B cell (primary cell): ENCODE measurements at regions of chr14 and their contacts with region 1.

Region 1: GRCh38 chr14:52391881-52392615 is 77.9 kb downstream of the PTGER2 start:
- DNase-seq: no peak
- ATAC-seq: no peak
- H3K4me3 ChIP-seq: no peak overlapping the region
- H3K4me3 Mint-ChIP-seq: no peak overlapping the region
- H3K27ac ChIP-seq: no peak overlapping the region
- H3K27ac Mint-ChIP-seq: no peak overlapping the region
- H3K4me1 ChIP-seq: no peaks in the 10 kb centered on the region
- H3K4me1 Mint-ChIP-seq: no peaks in the 10 kb centered on the region
- H3K27me3 ChIP-seq: peaks cover 0 to 4% (median 1%) of the 10 kb centered on the region in 4 experiments
- H3K27me3 Mint-ChIP-seq: peaks cover 29% of the 10 kb centered on the region
- CTCF ChIP-seq: no peak

Region 2: GRCh38 chr14:52325126-52325525 is 66.9 kb before region 1 on chr14:
- CTCF ChIA-PET with region 1: no interaction called
- POLR2A ChIA-PET with region 1: no interaction called
- intact Hi-C with region 1: no loop called
- DNase-seq: peak; percentile 76
- ATAC-seq: peak; percentile 96
- H3K4me3 ChIP-seq: no peak overlapping the region
- H3K4me3 Mint-ChIP-seq: peak overlapping the region; percentile 33
- H3K27ac ChIP-seq: no peak overlapping the region
- H3K27ac Mint-ChIP-seq: peak overlapping the region; percentile 69
- H3K4me1 ChIP-seq: peaks cover 22 to 23% of the 10 kb centered on the region in 2 donors
- H3K4me1 Mint-ChIP-seq: peaks cover 23% of the 10 kb centered on the region
- H3K27me3 ChIP-seq: peaks cover 0 to 19% (median 13%) of the 10 kb centered on the region in 4 experiments
- H3K27me3 Mint-ChIP-seq: peaks cover 28% of the 10 kb centered on the region
- CTCF ChIP-seq: no peak

Region 3: GRCh38 chr14:52455291-52456088 is 63.4 kb after region 1 on chr14:
- CTCF ChIA-PET with region 1: no interaction called
- POLR2A ChIA-PET with region 1: no interaction called
- intact Hi-C with region 1: loop called (anchors 1 kb)
- DNase-seq: no peak
- ATAC-seq: no peak
- H3K4me3 ChIP-seq: no peak overlapping the region
- H3K4me3 Mint-ChIP-seq: no peak overlapping the region
- H3K27ac ChIP-seq: no peak overlapping the region
- H3K27ac Mint-ChIP-seq: no peak overlapping the region
- H3K4me1 ChIP-seq: no peaks in the 10 kb centered on the region
- H3K4me1 Mint-ChIP-seq: no peaks in the 10 kb centered on the region
- H3K27me3 ChIP-seq: no peaks in the 10 kb centered on the region
- H3K27me3 Mint-ChIP-seq: no peaks in the 10 kb centered on the region
- CTCF ChIP-seq: no peak